ENCODE measurements at regions of chr15 and their contacts with region 1.

Region 1: GRCh38 chr15:68875377-68876116 is 54.8 kb upstream of the SPESP1 start:
- DNase-seq: peak; percentile 78
- H3K4me3 ChIP-seq: peak overlapping the region in 1 of 2 experiments; percentile 52; a peak in 2 of 4 replicates
- H3K27ac ChIP-seq: no peak overlapping the region
- H3K4me1 ChIP-seq: no peaks in the 10 kb centered on the region
- H3K27me3 ChIP-seq: peaks cover 11% of the 10 kb centered on the region; the same call in 1 of the 2 replicates
- CTCF ChIP-seq: peak; percentile 93
- EP300 ChIP-seq: no peak
- RAD21 ChIP-seq: peak; percentile 97

Region 2: GRCh38 chr15:68559345-68560310 is 315.9 kb before region 1 on chr15:
- CTCF ChIA-PET with region 1: interaction called, 137 read pairs
- POLR2A ChIA-PET with region 1: no interaction called
- DNase-seq: peak; percentile 93
- H3K4me3 ChIP-seq: peak overlapping the region; percentile 43 to 61
- H3K27ac ChIP-seq: no peak overlapping the region
- H3K4me1 ChIP-seq: peaks cover 0 to 7% of the 10 kb centered on the region in 2 experiments; a peak in 1 of 4 replicates
- H3K27me3 ChIP-seq: no peaks in the 10 kb centered on the region
- CTCF ChIP-seq: peak; percentile 91
- EP300 ChIP-seq: no peak
- RAD21 ChIP-seq: peak; percentile 79

Region 3: GRCh38 chr15:68620721-68621527 is 254.6 kb before region 1 on chr15:
- CTCF ChIA-PET with region 1: no interaction called
- POLR2A ChIA-PET with region 1: no interaction called
- DNase-seq: no peak
- H3K4me3 ChIP-seq: no peak overlapping the region
- H3K27ac ChIP-seq: no peak overlapping the region
- H3K4me1 ChIP-seq: peaks cover 6 to 25% of the 10 kb centered on the region in 2 experiments; a peak in 2 of 4 replicates
- H3K27me3 ChIP-seq: no peaks in the 10 kb centered on the region
- CTCF ChIP-seq: no peak
- EP300 ChIP-seq: no peak
- RAD21 ChIP-seq: no peak

Region 4: DNA sequence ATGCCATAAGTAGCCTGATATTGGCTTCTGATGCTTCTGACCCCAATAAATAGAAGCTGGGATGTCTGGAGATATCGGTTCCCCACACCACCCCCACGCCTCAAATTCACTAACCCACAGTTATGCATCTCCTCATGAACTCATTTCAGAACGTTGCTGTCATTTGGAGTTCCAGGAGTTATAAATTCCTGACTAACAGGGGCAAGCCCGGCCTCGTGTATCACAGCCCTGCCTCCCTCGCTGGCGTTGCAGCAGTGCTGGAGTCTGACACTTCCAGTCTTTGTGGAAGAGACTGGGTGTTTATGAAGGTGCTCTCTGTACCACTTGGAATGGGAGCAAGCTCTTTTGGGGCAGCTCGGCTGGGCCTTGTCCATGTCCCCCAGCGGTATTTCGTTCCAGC is 155.9 kb before region 1 on chr15:
- CTCF ChIA-PET with region 1: interaction called, 90 read pairs
- POLR2A ChIA-PET with region 1: no interaction called
- DNase-seq: no peak
- H3K4me3 ChIP-seq: no peak overlapping the region
- H3K27ac ChIP-seq: no peak overlapping the region
- H3K4me1 ChIP-seq: no peaks in the 10 kb centered on the region
- H3K27me3 ChIP-seq: no peaks in the 10 kb centered on the region
- CTCF ChIP-seq: no peak
- EP300 ChIP-seq: no peak
- RAD21 ChIP-seq: no peak

Region 5: GRCh38 chr15:68783226-68784058 is 92.1 kb before region 1 on chr15:
- CTCF ChIA-PET with region 1: interaction called, 21 read pairs
- POLR2A ChIA-PET with region 1: interaction called, 3 read pairs
- DNase-seq: peak; percentile 62
- H3K4me3 ChIP-seq: no peak overlapping the region
- H3K27ac ChIP-seq: no peak overlapping the region
- H3K4me1 ChIP-seq: no peaks in the 10 kb centered on the region; a peak in 1 of 4 replicates
- H3K27me3 ChIP-seq: no peaks in the 10 kb centered on the region
- CTCF ChIP-seq: peak; percentile 60
- EP300 ChIP-seq: no peak
- RAD21 ChIP-seq: peak; percentile 55

Region 6: DNA sequence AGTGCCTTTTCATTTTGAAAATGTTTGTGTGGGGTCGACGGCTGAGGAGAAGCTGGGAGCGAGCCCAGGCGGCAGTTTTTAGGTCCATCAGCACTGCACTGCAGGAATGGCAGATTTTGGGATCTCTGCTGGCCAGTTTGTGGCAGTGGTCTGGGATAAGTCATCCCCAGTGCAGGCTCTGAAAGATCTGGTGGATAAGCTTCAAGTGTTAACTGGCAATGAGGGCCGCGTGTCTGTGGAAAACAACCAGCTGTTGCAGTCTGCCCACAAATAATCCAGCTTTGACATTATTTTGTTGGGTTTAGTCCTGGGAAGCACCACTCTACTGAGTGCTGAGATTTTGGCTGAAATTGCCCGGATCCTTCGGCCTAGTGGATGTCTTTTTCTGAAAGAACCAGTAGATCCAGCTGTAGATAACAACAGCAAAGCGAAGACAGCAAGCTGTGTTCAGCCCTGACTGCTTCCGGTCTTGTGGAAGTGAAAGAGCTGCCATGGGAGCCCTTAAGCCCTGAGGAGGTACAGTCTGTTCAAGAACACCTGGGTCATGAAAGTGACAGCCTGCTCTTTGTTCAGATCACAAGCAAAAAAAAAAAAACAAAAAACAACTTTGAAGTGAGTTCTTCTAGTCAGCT is 41.7 kb before region 1 on chr15:
- CTCF ChIA-PET with region 1: interaction called, 10 read pairs
- POLR2A ChIA-PET with region 1: no interaction called
- DNase-seq: peak; percentile 37
- H3K4me3 ChIP-seq: no peak overlapping the region
- H3K27ac ChIP-seq: peak overlapping the region in 1 of 2 experiments; percentile 40; a peak in 1 of 4 replicates
- H3K4me1 ChIP-seq: peaks cover 0 to 12% of the 10 kb centered on the region in 2 experiments; a peak in 1 of 4 replicates
- H3K27me3 ChIP-seq: peaks cover 7% of the 10 kb centered on the region
- CTCF ChIP-seq: no peak
- EP300 ChIP-seq: no peak
- RAD21 ChIP-seq: no peak

Region 7: GRCh38 chr15:68934341-68934740 is 58.8 kb after region 1 on chr15:
- CTCF ChIA-PET with region 1: interaction called, 14 read pairs
- POLR2A ChIA-PET with region 1: no interaction called
- DNase-seq: no peak
- H3K4me3 ChIP-seq: no peak overlapping the region
- H3K27ac ChIP-seq: no peak overlapping the region
- H3K4me1 ChIP-seq: no peaks in the 10 kb centered on the region
- H3K27me3 ChIP-seq: peaks cover 4% of the 10 kb centered on the region; the same call in 1 of the 2 replicates
- CTCF ChIP-seq: no peak
- EP300 ChIP-seq: no peak
- RAD21 ChIP-seq: no peak

Measured in SK-N-SH (cell line).